ENCODE measurements at regions of chr9 and their contacts with region 1.

Region 1: GRCh38 chr9:14768405-14769229 is 46.1 kb upstream of the CER1 start:
- DNase-seq: no peak
- ATAC-seq: peak in 1 of 2 donors; percentile 57
- H3K4me3 ChIP-seq: no peak overlapping the region
- H3K27ac ChIP-seq: no peak overlapping the region
- H3K4me1 ChIP-seq: no peaks in the 10 kb centered on the region
- H3K27me3 ChIP-seq: no peaks in the 10 kb centered on the region
- CTCF ChIP-seq: peak; percentile 68

Region 2: DNA sequence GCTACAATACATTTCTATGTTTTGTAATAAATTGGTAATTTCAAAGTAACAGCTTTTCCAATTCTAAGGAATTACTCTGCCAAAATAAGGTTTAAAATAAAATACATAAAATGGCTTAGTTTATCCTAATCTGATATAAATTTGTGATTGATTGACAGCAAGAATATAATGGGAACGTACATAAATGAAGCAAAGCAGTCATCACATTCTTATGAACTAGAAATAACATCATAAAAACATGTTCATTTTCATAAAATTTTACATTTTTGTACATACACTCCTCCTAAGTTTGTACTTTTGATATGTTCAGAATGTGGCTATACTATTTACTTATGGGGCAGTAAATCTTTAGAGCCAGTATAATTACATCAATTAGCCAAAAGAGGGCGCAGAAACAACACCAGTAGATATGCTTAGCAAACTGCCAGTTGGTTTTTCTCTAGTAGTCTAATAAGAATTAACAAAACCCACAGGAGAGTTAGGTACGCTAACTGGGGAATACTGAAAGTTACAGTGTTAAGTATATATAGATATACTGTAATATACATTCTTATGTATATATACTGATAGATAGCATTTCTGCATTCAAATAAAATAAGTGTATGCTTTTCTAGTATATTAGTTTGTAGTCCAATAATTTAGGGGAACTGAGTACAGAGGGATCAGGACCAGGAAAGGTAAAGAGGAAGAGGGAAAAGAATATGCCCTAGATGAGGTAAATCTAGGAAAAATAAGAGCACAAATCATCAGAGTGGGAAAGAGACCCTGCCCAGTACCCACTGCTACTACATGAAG is 152.2 kb before region 1 on chr9:
- intact Hi-C with region 1: loop called (anchors 5 kb)
- DNase-seq: no peak
- ATAC-seq: peak; percentile 65 to 75
- H3K4me3 ChIP-seq: no peak overlapping the region
- H3K27ac ChIP-seq: no peak overlapping the region
- H3K4me1 ChIP-seq: no peaks in the 10 kb centered on the region
- H3K27me3 ChIP-seq: no peaks in the 10 kb centered on the region
- CTCF ChIP-seq: peak; percentile 62

Region 3: DNA sequence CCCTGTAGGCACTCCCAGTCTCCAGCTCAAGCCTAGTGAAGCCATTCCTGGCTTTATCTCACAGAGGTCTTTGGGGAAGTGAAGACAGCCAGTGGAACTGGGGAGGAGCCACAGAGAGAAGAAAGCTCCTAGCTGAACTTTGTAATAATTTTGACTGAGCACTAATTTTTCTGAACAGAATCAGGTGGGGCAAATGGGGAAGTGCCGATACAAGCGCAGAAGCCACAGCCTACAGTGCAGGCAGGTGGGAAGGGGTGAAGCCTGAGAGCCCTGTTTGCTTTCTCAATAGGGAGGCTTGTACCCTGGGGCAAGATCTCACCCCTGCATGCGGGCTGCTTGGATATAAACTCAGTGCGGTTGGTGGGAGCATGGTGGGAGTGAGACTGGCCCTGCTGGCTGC is 605.7 kb after region 1 on chr9:
- intact Hi-C with region 1: no loop called
- DNase-seq: no peak
- ATAC-seq: peak; percentile 36 to 64
- H3K4me3 ChIP-seq: no peak overlapping the region
- H3K27ac ChIP-seq: no peak overlapping the region
- H3K4me1 ChIP-seq: no peaks in the 10 kb centered on the region
- H3K27me3 ChIP-seq: no peaks in the 10 kb centered on the region
- CTCF ChIP-seq: no peak

Region 4: GRCh38 chr9:15606643-15607472 is 838.2 kb after region 1 on chr9:
- intact Hi-C with region 1: no loop called
- DNase-seq: no peak
- ATAC-seq: no peak
- H3K4me3 ChIP-seq: no peak overlapping the region
- H3K27ac ChIP-seq: no peak overlapping the region
- H3K4me1 ChIP-seq: no peaks in the 10 kb centered on the region
- H3K27me3 ChIP-seq: no peaks in the 10 kb centered on the region
- CTCF ChIP-seq: peak; percentile 78

Measured in lower lobe of right lung (tissue), 2 donors.